T-cell (primary cell): ENCODE measurements at regions of chr15 and their contacts with region 1.

Region 1: GRCh38 chr15:42940527-42940926 is 19.9 kb upstream of the TTBK2 start:
- DNase-seq: no peak
- ATAC-seq: no peak
- H3K4me3 ChIP-seq: no peak overlapping the region
- H3K4me3 Mint-ChIP-seq: no peak overlapping the region
- H3K27ac ChIP-seq: no peak overlapping the region
- H3K27ac Mint-ChIP-seq: no peak overlapping the region
- H3K4me1 ChIP-seq: no peaks in the 10 kb centered on the region
- H3K4me1 Mint-ChIP-seq: no peaks in the 10 kb centered on the region
- H3K27me3 ChIP-seq: no peaks in the 10 kb centered on the region
- H3K27me3 Mint-ChIP-seq: no peaks in the 10 kb centered on the region

Region 2: DNA sequence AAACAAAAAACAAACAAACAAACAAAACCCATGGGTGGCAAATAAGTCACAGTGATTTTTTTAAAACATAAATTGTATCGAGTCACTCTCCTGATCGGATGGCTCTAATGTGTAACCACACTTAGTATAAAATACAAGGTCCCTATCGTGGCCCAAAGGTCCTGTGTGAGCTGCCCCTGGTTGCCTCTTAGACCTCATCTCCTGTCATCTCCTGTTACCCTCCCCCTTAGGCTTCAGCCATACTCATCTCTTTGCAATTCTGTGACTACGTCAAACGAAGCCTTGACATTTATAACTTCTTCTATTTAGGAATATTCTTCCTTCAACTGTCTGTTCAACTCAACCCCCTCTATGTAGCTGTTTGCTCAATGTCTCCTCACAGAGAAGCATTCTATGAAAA is 23.9 kb after region 1 on chr15:
- CTCF ChIA-PET with region 1: no interaction called
- POLR2A ChIA-PET with region 1: interaction called in 1 of 2 experiments, 11 read pairs
- DNase-seq: no peak
- ATAC-seq: no peak
- H3K4me3 ChIP-seq: no peak overlapping the region
- H3K4me3 Mint-ChIP-seq: no peak overlapping the region
- H3K27ac ChIP-seq: no peak overlapping the region
- H3K27ac Mint-ChIP-seq: no peak overlapping the region
- H3K4me1 ChIP-seq: no peaks in the 10 kb centered on the region
- H3K4me1 Mint-ChIP-seq: no peaks in the 10 kb centered on the region
- H3K27me3 ChIP-seq: no peaks in the 10 kb centered on the region
- H3K27me3 Mint-ChIP-seq: no peaks in the 10 kb centered on the region